ENCODE measurements at regions of chr2 and their contacts with region 1.

Region 1: GRCh38 chr2:24971536-24972314 is at the start of gene DNAJC27:
- DNase-seq: peak; percentile 98 to 99 (median 99)
- ATAC-seq: peak; percentile 97
- H3K4me3 ChIP-seq: peak within 1 kb of the TSS; percentile 87
- H3K27ac ChIP-seq: peak within 1 kb of the TSS; percentile 97
- H3K4me1 ChIP-seq: no peaks in the 10 kb centered on the region
- H3K27me3 ChIP-seq: no peaks in the 10 kb centered on the region
- total RNA-seq, gene DNAJC27: 8.7 to 10.4 (median 9.5) TPM

Region 2: DNA sequence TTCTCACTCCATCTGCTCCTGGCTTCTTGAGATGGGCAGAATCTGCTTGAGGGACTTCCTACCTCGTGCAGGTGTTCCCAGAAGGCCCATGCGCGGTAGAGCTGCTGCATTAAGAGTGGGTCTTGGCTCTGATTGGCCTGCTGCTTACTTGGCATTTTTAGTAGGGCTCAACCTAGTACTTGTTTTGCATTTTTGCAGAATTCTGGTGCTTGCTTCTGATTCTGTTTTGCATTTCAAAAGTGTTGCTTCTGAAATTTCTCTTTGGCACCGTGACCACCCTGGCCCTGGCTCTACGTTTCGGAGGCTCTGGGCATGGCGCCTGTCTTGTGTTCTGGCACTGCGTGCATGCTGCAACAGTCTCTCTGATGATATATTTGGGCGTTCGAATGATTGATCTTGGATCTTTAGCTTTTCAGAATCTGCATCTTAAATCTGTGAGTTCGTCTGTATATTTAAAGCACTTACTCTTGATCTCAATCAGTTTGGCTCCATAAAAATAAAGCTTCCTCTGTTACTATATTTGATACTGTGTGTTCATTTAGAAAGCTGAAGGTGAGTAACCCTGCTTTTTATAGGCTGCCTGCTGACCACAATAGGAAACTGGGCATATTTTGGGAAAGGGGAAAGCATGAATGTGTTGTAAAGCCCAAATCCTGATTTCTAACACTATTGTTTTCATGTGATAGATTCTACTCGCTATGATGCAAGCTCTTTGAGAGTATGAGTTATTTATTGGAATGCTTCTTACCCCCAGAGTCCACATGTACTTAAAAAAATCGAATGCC is 92.3 kb after region 1 on chr2:
- intact Hi-C with region 1: no loop called
- DNase-seq: peak in 2 of 3 donors; percentile 30 to 73
- ATAC-seq: no peak
- H3K4me3 ChIP-seq: no peak overlapping the region
- H3K27ac ChIP-seq: peak overlapping the region; percentile 17
- H3K4me1 ChIP-seq: peaks cover 4% of the 10 kb centered on the region
- H3K27me3 ChIP-seq: no peaks in the 10 kb centered on the region

Region 3: DNA sequence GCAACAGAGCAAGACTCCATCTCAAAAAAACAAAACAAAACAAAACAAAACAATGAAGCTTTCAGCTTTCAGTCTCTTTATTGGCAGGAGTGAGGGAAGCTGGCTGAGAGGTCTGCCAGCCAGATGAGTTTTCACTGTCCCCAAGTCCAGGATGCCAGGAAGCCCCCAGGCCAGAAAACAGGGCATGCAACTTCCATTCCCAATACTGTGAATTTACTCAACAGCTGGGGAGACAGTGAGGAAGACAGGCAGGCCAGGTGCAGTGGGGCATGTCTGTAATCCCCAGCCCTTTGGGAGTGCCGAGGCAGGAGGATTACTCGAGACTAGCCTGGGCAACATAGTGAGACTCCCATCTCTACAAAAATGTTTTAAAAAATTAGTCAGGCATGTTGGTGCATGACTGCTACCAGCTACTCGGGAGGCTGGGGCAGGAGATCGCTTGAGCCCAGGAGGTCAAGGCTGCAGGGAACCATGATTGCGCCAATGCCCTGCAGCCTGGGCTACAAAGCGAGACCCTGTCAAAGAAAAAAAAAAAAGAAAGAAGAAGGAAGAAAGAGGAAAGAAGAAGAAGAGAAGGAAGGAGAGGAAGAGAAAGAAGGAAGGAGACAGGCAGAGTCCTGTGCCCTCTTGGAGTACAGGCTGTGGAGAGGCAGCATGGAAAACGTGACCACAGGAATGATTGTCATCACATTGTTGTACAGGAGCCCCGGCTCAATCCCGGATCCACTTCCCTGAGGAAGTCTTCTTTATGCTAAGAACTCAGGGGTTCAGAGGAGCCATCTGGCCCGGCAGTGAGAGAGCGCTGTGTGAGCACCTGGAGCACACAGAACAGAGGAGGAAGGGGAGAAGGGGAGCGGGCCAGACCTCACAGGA is 225.8 kb after region 1 on chr2:
- intact Hi-C with region 1: loop called in 2 of 4 experiments (anchors 5 to 10 kb)
- DNase-seq: no peak
- ATAC-seq: no peak
- H3K4me3 ChIP-seq: no peak overlapping the region
- H3K27ac ChIP-seq: no peak overlapping the region
- H3K4me1 ChIP-seq: no peaks in the 10 kb centered on the region
- H3K27me3 ChIP-seq: no peaks in the 10 kb centered on the region